Caco-2 (cell line): ENCODE measurements at regions of chr1 and their contacts with region 1.

Region 1: DNA sequence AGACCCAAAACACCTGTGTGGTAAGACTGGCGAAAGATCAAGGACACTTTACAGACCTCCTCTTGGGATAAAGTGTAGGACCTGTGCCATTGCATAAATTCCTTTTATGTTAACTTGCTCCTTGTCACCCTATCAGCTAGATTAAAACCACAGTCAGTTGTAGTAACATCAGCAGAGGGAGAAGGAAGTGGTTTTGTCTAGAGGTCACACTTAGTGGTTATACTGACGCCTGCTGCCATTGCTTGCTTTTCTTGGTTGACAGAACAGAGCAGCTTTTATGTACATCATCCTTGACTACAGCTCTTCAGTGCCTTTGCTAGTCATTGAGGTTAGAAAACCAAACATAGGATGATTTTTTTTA is 101.4 kb downstream of the PBX1 start:
- DNase-seq: no peak
- H3K4me3 ChIP-seq: no peak overlapping the region
- H3K4me3 Mint-ChIP-seq: peak overlapping the region; percentile 63
- H3K27ac Mint-ChIP-seq: peak overlapping the region; percentile 99
- H3K4me1 ChIP-seq: peaks cover 82% of the 10 kb centered on the region
- H3K4me1 Mint-ChIP-seq: peaks cover 48% of the 10 kb centered on the region
- H3K27me3 ChIP-seq: no peaks in the 10 kb centered on the region
- H3K27me3 Mint-ChIP-seq: no peaks in the 10 kb centered on the region
- CTCF ChIP-seq: no peak

Region 2: GRCh38 chr1:164518692-164519332 is 141.6 kb before region 1 on chr1:
- CTCF ChIA-PET with region 1: no interaction called
- POLR2A ChIA-PET with region 1: no interaction called
- intact Hi-C with region 1: loop called (anchors 5 kb)
- DNase-seq: peak in 1 of 2 experiments; percentile 13
- H3K4me3 ChIP-seq: no peak overlapping the region
- H3K4me3 Mint-ChIP-seq: no peak overlapping the region
- H3K27ac Mint-ChIP-seq: no peak overlapping the region
- H3K4me1 ChIP-seq: no peaks in the 10 kb centered on the region
- H3K4me1 Mint-ChIP-seq: no peaks in the 10 kb centered on the region
- H3K27me3 ChIP-seq: no peaks in the 10 kb centered on the region
- H3K27me3 Mint-ChIP-seq: no peaks in the 10 kb centered on the region
- CTCF ChIP-seq: peak in 1 of 2 experiments; percentile 21

Region 3: GRCh38 chr1:164588516-164589341 is 71.7 kb before region 1 on chr1:
- CTCF ChIA-PET with region 1: no interaction called
- POLR2A ChIA-PET with region 1: no interaction called
- intact Hi-C with region 1: loop called (anchors 1 kb)
- DNase-seq: peak; percentile 91 to 95
- H3K4me3 ChIP-seq: peak overlapping the region; percentile 32
- H3K4me3 Mint-ChIP-seq: peak overlapping the region; percentile 73
- H3K27ac Mint-ChIP-seq: peak overlapping the region; percentile 97
- H3K4me1 ChIP-seq: peaks cover 52% of the 10 kb centered on the region
- H3K4me1 Mint-ChIP-seq: peaks cover 71% of the 10 kb centered on the region
- H3K27me3 ChIP-seq: no peaks in the 10 kb centered on the region
- H3K27me3 Mint-ChIP-seq: no peaks in the 10 kb centered on the region
- CTCF ChIP-seq: no peak

Region 4: GRCh38 chr1:164625001-164625617 is 35.3 kb before region 1 on chr1:
- CTCF ChIA-PET with region 1: no interaction called
- POLR2A ChIA-PET with region 1: no interaction called
- intact Hi-C with region 1: loop called (anchors 5 kb)
- DNase-seq: no peak
- H3K4me3 ChIP-seq: no peak overlapping the region
- H3K4me3 Mint-ChIP-seq: no peak overlapping the region
- H3K27ac Mint-ChIP-seq: no peak overlapping the region
- H3K4me1 ChIP-seq: peaks cover under 1% of the 10 kb centered on the region
- H3K4me1 Mint-ChIP-seq: peaks cover 40% of the 10 kb centered on the region
- H3K27me3 ChIP-seq: no peaks in the 10 kb centered on the region
- H3K27me3 Mint-ChIP-seq: no peaks in the 10 kb centered on the region
- CTCF ChIP-seq: peak; percentile 30 to 42

Region 5: DNA sequence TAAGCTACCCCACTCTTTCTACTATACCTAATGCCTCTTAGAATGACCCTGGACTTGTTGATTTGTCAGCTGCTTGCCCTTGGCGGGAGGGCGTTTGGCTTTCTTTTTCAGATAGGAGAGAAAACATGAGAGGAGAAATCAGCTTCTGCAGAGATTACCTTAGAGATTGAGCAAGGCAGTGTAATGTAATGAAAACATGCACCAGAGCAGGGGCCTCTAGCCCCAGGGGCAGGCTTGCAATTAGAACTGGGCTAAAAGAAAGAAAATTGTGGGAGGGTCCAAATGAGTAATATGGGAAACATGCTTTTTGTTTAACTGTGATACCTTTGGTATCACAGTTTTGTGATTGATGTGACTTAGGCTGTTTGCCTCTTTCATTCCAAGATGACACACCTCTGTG is 11.8 kb before region 1 on chr1:
- CTCF ChIA-PET with region 1: interaction called, 3 read pairs
- POLR2A ChIA-PET with region 1: interaction called, 16 read pairs
- intact Hi-C with region 1: loop called (anchors 1 kb)
- DNase-seq: peak; percentile 83 to 85
- H3K4me3 ChIP-seq: no peak overlapping the region
- H3K4me3 Mint-ChIP-seq: peak overlapping the region; percentile 44
- H3K27ac Mint-ChIP-seq: peak overlapping the region; percentile 80
- H3K4me1 ChIP-seq: peaks cover 59% of the 10 kb centered on the region
- H3K4me1 Mint-ChIP-seq: peaks cover 59% of the 10 kb centered on the region
- H3K27me3 ChIP-seq: no peaks in the 10 kb centered on the region
- H3K27me3 Mint-ChIP-seq: no peaks in the 10 kb centered on the region
- CTCF ChIP-seq: no peak

Region 6: DNA sequence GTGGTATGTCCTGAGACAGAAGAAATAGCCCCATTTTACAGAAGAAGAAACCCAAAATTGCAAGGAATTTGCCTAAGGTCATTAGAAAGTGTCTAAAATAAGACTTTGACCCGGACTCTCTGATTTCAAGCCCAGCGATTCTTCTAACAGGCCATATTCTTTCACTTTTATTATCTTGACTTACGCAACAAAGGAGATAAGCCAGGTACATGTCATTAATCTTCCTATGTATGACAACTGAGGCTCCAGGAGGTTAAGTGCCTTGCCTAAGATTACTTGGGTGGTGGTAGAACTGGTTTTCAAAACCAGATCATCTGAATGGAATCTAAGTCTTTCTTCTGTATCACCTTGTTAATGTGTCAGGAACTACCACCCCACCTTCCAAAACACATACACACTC is 22.8 kb after region 1 on chr1:
- CTCF ChIA-PET with region 1: no interaction called
- POLR2A ChIA-PET with region 1: no interaction called
- intact Hi-C with region 1: loop called (anchors 2 kb)
- DNase-seq: peak; percentile 78 to 85
- H3K4me3 ChIP-seq: no peak overlapping the region
- H3K4me3 Mint-ChIP-seq: peak overlapping the region; percentile 67
- H3K27ac Mint-ChIP-seq: peak overlapping the region; percentile 89
- H3K4me1 ChIP-seq: peaks cover 61% of the 10 kb centered on the region
- H3K4me1 Mint-ChIP-seq: peaks cover 42% of the 10 kb centered on the region
- H3K27me3 ChIP-seq: no peaks in the 10 kb centered on the region
- H3K27me3 Mint-ChIP-seq: no peaks in the 10 kb centered on the region
- CTCF ChIP-seq: no peak

Region 7: DNA sequence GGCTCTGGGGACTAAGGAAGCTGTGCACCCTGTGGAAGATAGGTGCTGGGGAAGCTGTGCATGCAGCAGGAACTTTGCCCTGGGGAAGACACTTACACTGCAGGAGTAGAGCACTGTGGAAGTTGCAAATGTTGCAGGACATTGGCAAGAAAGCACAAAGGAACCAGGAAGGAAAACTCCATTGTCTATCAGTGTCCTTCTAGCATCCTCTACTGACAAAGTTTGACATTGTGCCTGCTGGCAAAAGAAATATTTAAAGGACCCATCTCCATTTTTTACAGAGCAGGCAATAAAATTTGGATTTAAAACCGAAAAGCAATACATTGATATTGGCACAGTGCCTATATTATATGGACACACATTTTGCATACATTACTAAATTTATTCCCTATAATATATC is 292.7 kb after region 1 on chr1:
- CTCF ChIA-PET with region 1: no interaction called
- POLR2A ChIA-PET with region 1: no interaction called
- intact Hi-C with region 1: no loop called
- DNase-seq: no peak
- H3K4me3 ChIP-seq: no peak overlapping the region
- H3K4me3 Mint-ChIP-seq: no peak overlapping the region
- H3K27ac Mint-ChIP-seq: no peak overlapping the region
- H3K4me1 ChIP-seq: no peaks in the 10 kb centered on the region
- H3K4me1 Mint-ChIP-seq: no peaks in the 10 kb centered on the region
- H3K27me3 ChIP-seq: no peaks in the 10 kb centered on the region
- H3K27me3 Mint-ChIP-seq: peaks cover 11% of the 10 kb centered on the region
- CTCF ChIP-seq: peak in 1 of 2 experiments; percentile 24